ENCODE measurements at regions of chr16 and their contacts with region 1.

Region 1: GRCh38 chr16:50354629-50355456 is 13.9 kb downstream of the BRD7 start:
- DNase-seq: no peak
- H3K4me3 ChIP-seq: no peak overlapping the region
- H3K27ac ChIP-seq: peak overlapping the region; percentile 63 to 78
- H3K4me1 ChIP-seq: peaks cover 0 to 38% (median 10%) of the 10 kb centered on the region in 4 donors
- H3K27me3 ChIP-seq: no peaks in the 10 kb centered on the region
- CTCF ChIP-seq: peak; percentile 62 to 74

Region 2: GRCh38 chr16:50185005-50185505 is 169.8 kb before region 1 on chr16:
- intact Hi-C with region 1: no loop called
- DNase-seq: no peak
- H3K4me3 ChIP-seq: no peak overlapping the region
- H3K27ac ChIP-seq: peak overlapping the region; percentile 51 to 64
- H3K4me1 ChIP-seq: peaks cover 0 to 88% (median 34%) of the 10 kb centered on the region in 4 donors
- H3K27me3 ChIP-seq: no peaks in the 10 kb centered on the region
- CTCF ChIP-seq: no peak

Region 3: GRCh38 chr16:50210266-50211038 is 144.4 kb before region 1 on chr16:
- intact Hi-C with region 1: loop called (anchors 10 kb)
- DNase-seq: peak; percentile 77 to 85
- H3K4me3 ChIP-seq: no peak overlapping the region
- H3K27ac ChIP-seq: peak overlapping the region; percentile 25 to 42
- H3K4me1 ChIP-seq: peaks cover 0 to 63% (median 43%) of the 10 kb centered on the region in 4 donors
- H3K27me3 ChIP-seq: no peaks in the 10 kb centered on the region
- CTCF ChIP-seq: peak; percentile 61 to 64

Region 4: GRCh38 chr16:50245417-50246298 is 109.2 kb before region 1 on chr16:
- intact Hi-C with region 1: loop called (anchors 10 kb)
- DNase-seq: peak; percentile 63 to 77
- H3K4me3 ChIP-seq: peak overlapping the region; percentile 61 to 76
- H3K27ac ChIP-seq: peak overlapping the region; percentile 65
- H3K4me1 ChIP-seq: peaks cover 0 to 21% (median 18%) of the 10 kb centered on the region in 4 donors
- H3K27me3 ChIP-seq: no peaks in the 10 kb centered on the region
- CTCF ChIP-seq: peak in 1 of 2 experiments; percentile 10

Region 5: GRCh38 chr16:50301626-50302471 is 53.0 kb before region 1 on chr16:
- intact Hi-C with region 1: no loop called
- DNase-seq: peak; percentile 74 to 80
- H3K4me3 ChIP-seq: no peak overlapping the region
- H3K27ac ChIP-seq: peak overlapping the region in 1 of 2 donors; percentile 49
- H3K4me1 ChIP-seq: peaks cover 0 to 3% (median 0%) of the 10 kb centered on the region in 4 donors
- H3K27me3 ChIP-seq: no peaks in the 10 kb centered on the region
- CTCF ChIP-seq: no peak